MCF 10A (cell line): ENCODE measurements at regions of chr1 and their contacts with region 1.

Region 1: GRCh38 chr1:159798893-159799292 is 3.3 kb upstream of the FCRL6 start:
- DNase-seq: peak; percentile 95
- H3K4me3 Mint-ChIP-seq: no peak overlapping the region
- H3K27ac Mint-ChIP-seq: no peak overlapping the region
- H3K4me1 Mint-ChIP-seq: no peaks in the 10 kb centered on the region
- H3K27me3 Mint-ChIP-seq: no peaks in the 10 kb centered on the region
- CTCF ChIP-seq: peak; percentile 83

Region 2: GRCh38 chr1:159161001-159161718 is 637.7 kb before region 1 on chr1:
- CTCF ChIA-PET with region 1: interaction called, 50 read pairs
- POLR2A ChIA-PET with region 1: no interaction called
- intact Hi-C with region 1: no loop called
- DNase-seq: peak; percentile 99
- H3K4me3 Mint-ChIP-seq: peak overlapping the region; percentile 43
- H3K27ac Mint-ChIP-seq: peak overlapping the region; percentile 69
- H3K4me1 Mint-ChIP-seq: peaks cover 34% of the 10 kb centered on the region
- H3K27me3 Mint-ChIP-seq: peaks cover 36% of the 10 kb centered on the region
- CTCF ChIP-seq: peak; percentile 100

Region 3: DNA sequence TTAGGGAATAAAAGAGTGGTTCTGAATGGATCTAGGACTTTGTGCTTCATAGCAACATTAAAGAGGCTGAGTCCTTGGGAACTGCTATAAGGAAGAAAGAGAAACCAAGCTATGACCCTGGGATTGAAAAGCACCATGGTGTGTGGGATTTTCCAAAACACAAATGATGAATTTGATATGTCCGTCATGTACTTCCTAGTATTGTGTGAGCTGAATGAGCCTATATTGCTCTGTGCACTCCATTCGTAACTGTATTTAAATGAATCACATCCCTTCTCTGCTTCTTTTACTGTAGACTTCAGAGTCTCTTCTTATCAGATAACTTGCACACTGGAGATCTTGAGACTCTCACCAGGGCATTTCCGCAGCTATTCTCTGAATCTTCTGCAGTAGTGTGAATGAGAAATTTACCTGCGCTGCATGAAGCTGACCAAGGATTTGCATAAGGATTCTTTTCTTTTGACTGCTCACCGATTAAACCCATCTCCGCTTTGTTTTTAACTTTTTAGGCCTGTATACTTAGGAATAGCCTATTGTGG is 390.0 kb before region 1 on chr1:
- CTCF ChIA-PET with region 1: no interaction called
- POLR2A ChIA-PET with region 1: no interaction called
- intact Hi-C with region 1: no loop called
- DNase-seq: no peak
- H3K4me3 Mint-ChIP-seq: no peak overlapping the region
- H3K27ac Mint-ChIP-seq: no peak overlapping the region
- H3K4me1 Mint-ChIP-seq: no peaks in the 10 kb centered on the region
- H3K27me3 Mint-ChIP-seq: no peaks in the 10 kb centered on the region
- CTCF ChIP-seq: no peak

Region 4: GRCh38 chr1:159763686-159764085 is 35.2 kb before region 1 on chr1:
- CTCF ChIA-PET with region 1: no interaction called
- POLR2A ChIA-PET with region 1: no interaction called
- intact Hi-C with region 1: no loop called
- DNase-seq: no peak
- H3K4me3 Mint-ChIP-seq: no peak overlapping the region
- H3K27ac Mint-ChIP-seq: no peak overlapping the region
- H3K4me1 Mint-ChIP-seq: peaks cover 7% of the 10 kb centered on the region
- H3K27me3 Mint-ChIP-seq: no peaks in the 10 kb centered on the region
- CTCF ChIP-seq: no peak

Region 5: GRCh38 chr1:159821171-159821867 is 22.4 kb after region 1 on chr1:
- CTCF ChIA-PET with region 1: interaction called, 28 read pairs
- POLR2A ChIA-PET with region 1: no interaction called
- intact Hi-C with region 1: no loop called
- DNase-seq: no peak
- H3K4me3 Mint-ChIP-seq: no peak overlapping the region
- H3K27ac Mint-ChIP-seq: no peak overlapping the region
- H3K4me1 Mint-ChIP-seq: peaks cover 14% of the 10 kb centered on the region
- H3K27me3 Mint-ChIP-seq: peaks cover 16% of the 10 kb centered on the region
- CTCF ChIP-seq: no peak

Region 6: GRCh38 chr1:159854693-159855192 is 55.9 kb after region 1 on chr1:
- CTCF ChIA-PET with region 1: interaction called, 57 read pairs
- POLR2A ChIA-PET with region 1: interaction called, 4 read pairs
- intact Hi-C with region 1: loop called (anchors 1 kb)
- DNase-seq: peak; percentile 88
- H3K4me3 Mint-ChIP-seq: peak overlapping the region; percentile 77
- H3K27ac Mint-ChIP-seq: peak overlapping the region; percentile 61
- H3K4me1 Mint-ChIP-seq: peaks cover 29% of the 10 kb centered on the region
- H3K27me3 Mint-ChIP-seq: no peaks in the 10 kb centered on the region
- CTCF ChIP-seq: no peak

Region 7: DNA sequence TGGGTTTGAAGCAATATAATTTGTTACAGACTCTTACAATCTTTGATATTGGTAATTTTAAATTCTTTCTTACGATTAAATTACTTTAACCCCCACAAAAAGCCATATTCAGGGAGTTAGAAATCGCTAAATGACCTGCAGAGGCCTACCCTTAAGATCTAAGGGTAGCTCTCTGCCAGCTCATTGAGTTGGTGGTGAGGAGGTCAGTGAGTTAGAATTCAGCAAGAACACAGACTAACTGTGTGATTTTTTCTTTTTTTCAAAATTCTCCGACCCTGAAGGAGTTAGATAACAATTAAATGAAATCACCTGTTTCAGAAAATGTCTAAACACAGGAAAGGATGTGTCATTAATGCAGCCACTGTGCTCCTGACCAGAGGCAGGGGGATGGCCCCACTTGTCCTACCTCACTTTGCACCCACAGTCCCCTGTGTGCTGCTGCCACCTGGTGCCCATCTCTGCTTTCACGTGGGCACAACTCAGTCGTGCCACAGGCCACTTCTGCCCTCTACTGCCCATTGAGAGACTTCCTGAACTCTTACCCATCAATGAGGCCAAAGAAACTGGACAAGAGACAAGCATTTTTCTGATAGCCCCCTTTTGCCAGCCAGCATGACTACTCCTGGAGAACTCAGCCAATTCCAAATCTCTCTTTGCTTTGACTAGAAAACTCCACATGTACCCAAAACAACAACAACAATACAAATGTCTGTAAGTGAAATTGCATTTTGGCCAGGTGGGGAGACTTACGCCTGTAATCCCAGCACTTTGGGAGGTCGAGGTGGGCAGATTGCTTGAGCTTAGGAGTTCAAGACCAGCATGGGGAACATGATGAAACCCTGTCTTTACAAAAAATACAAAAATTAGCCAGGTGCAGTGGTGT is 92.6 kb after region 1 on chr1:
- CTCF ChIA-PET with region 1: interaction called, 1,396 read pairs
- POLR2A ChIA-PET with region 1: interaction called, 57 read pairs
- intact Hi-C with region 1: loop called (anchors 1 kb)
- DNase-seq: peak; percentile 96
- H3K4me3 Mint-ChIP-seq: no peak overlapping the region
- H3K27ac Mint-ChIP-seq: peak overlapping the region; percentile 28
- H3K4me1 Mint-ChIP-seq: peaks cover 19% of the 10 kb centered on the region
- H3K27me3 Mint-ChIP-seq: no peaks in the 10 kb centered on the region
- CTCF ChIP-seq: peak; percentile 100

Region 8: DNA sequence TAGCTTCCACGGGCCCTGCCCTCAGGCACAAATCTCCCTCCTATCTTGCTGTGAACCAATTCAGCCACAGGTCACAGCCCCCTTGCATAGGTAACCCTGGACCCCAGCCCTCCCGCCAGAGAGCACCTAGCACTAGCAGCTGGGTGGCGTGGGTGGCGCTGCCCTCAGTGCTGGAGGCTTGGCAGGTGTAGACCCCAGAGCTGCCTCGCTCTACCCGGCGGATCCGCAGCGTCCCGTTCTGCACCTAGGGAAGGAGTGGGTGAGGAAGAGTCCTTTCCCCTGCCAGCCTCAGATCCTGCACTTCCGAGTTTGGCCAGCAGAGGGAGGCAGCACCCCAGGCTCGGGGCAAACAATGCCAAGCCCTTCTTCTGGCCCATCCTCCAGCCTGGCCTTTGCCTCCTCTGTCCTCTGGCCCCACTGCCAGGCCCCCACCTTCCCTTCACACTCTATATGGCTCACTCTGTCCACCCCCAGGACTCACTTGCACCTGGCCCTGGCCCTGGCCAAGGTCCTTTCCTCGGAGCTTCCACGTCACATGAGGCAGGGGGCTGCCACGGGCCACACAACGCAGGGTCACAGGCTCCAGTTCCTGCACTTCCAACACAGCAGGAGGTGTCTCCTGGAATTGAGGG is 137.5 kb after region 1 on chr1:
- CTCF ChIA-PET with region 1: interaction called, 13 read pairs
- POLR2A ChIA-PET with region 1: no interaction called
- intact Hi-C with region 1: no loop called
- DNase-seq: peak; percentile 85
- H3K4me3 Mint-ChIP-seq: no peak overlapping the region
- H3K27ac Mint-ChIP-seq: no peak overlapping the region
- H3K4me1 Mint-ChIP-seq: peaks cover 22% of the 10 kb centered on the region
- H3K27me3 Mint-ChIP-seq: no peaks in the 10 kb centered on the region
- CTCF ChIP-seq: peak; percentile 100